Tibial artery (tissue), 4 donors: ENCODE measurements at regions of chr2 and their contacts with region 1.

Region 1: DNA sequence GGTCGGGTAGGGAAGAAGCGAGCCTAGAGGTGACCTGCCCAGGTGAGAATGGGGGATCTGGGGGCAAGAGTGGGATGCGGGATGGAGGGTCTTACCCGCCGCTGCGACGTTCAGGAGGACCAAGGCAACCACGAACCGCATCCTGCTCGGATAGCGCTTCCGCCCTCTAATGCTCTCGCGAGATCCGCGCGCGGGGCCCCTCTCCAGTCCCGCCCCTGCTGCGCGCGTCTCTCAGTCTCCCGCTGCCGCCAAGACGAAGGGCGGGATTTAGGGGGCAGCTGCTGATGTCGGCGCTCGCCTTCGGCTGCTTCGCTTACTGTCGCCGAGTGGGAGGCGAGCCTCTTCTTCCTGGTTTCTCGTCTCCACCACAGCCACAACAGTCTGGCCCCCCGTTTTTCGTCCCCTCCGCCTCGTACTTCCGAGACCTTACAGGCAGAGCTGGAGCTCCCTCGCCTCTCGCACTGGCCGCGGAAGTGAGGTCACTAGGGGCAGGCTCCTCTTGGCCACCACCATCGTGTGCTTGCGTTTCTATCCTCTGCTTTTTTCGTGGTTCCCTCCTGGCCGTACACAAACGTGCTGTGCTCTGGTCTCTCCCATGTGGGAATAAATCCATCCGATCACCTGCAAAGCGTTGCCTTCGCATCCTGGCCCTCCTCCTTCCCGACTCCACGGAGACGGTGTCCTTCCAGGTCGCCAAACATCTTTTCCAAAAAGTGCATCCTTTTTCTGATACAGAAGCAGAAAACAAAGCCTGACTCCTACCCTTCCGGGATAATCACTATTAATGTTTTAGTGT is at the start of gene TGOLN2:
- DNase-seq: peak; percentile 92 to 95
- H3K4me3 ChIP-seq: peak within 1 kb of the TSS; percentile 82 to 87
- H3K27ac ChIP-seq: peak within 1 kb of the TSS; percentile 88 to 96
- H3K4me1 ChIP-seq: peaks cover 0 to 51% (median 31%) of the 10 kb centered on the region in 4 donors
- H3K27me3 ChIP-seq: no peaks in the 10 kb centered on the region
- CTCF ChIP-seq: no peak

Region 2: GRCh38 chr2:85354286-85355072 is 26.5 kb after region 1 on chr2 and contains the starts of genes ELMOD3 and RETSAT:
- intact Hi-C with region 1: loop called (anchors 1 kb)
- DNase-seq: peak; percentile 99
- H3K4me3 ChIP-seq: peak within 1 kb of the TSS; percentile 62 to 80
- H3K27ac ChIP-seq: peak within 1 kb of the TSS; percentile 86 to 92
- H3K4me1 ChIP-seq: peaks cover 0 to 38% (median 29%) of the 10 kb centered on the region in 4 donors
- H3K27me3 ChIP-seq: no peaks in the 10 kb centered on the region
- CTCF ChIP-seq: peak in 1 of 2 experiments; percentile 15

Region 3: DNA sequence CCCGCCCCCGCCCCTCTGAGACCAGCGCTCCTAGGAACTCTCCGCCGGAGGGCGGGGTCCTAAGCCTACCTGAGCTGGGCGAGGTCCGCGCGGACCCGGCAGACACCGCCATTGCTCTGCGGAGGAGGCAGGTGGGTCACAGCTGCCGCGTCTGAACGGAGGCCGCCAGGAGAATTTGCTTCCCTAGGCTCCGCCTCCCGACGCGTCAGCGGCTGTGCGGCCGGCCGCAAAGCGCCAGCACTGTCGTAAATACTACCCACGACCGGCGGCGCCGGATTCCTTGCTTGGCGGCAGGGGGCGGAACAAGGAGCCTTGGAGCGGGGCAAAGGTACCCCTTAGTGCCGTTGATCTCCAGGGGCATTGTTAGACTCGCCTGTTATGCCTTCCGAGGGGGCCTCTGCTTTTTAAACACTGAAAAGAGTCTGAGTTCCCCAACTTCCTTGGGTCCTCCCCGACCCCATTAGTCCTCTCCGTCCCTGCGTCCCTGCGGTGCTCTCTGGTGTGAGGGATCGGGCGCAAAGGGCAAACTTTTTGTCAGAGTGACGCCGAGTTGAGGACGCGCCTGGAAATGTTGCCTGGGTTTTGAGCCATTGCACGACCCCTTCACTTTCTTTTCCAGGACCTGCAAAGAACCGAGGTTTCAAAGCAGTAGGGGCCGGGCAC is 233.4 kb after region 1 on chr2 and contains the start of gene GGCX:
- intact Hi-C with region 1: loop called (anchors 10 kb)
- DNase-seq: peak; percentile 95 to 97
- H3K4me3 ChIP-seq: peak within 1 kb of the TSS; percentile 89 to 92
- H3K27ac ChIP-seq: peak within 1 kb of the TSS; percentile 89 to 90
- H3K4me1 ChIP-seq: peaks cover 0 to 25% (median 17%) of the 10 kb centered on the region in 4 donors
- H3K27me3 ChIP-seq: no peaks in the 10 kb centered on the region
- CTCF ChIP-seq: peak; percentile 18 to 34